Right cardiac atrium (tissue), 5 donors: ENCODE measurements at regions of chrX and their contacts with region 1.

Region 1: GRCh38 chrX:31036895-31037294 is 34.9 kb downstream of the FTHL17 start:
- DNase-seq: peak in 2 of 3 donors; percentile 22 to 26
- ATAC-seq: peak; percentile 57 to 71
- H3K4me3 ChIP-seq: no peak overlapping the region
- H3K27ac ChIP-seq: no peak overlapping the region
- H3K4me1 ChIP-seq: no peaks in the 10 kb centered on the region
- H3K27me3 ChIP-seq: no peaks in the 10 kb centered on the region

Region 2: GRCh38 chrX:30791296-30792278 is 245.3 kb before region 1 on chrX:
- intact Hi-C with region 1: no loop called
- DNase-seq: no peak
- ATAC-seq: no peak
- H3K4me3 ChIP-seq: no peak overlapping the region
- H3K27ac ChIP-seq: no peak overlapping the region
- H3K4me1 ChIP-seq: no peaks in the 10 kb centered on the region
- H3K27me3 ChIP-seq: no peaks in the 10 kb centered on the region

Region 3: DNA sequence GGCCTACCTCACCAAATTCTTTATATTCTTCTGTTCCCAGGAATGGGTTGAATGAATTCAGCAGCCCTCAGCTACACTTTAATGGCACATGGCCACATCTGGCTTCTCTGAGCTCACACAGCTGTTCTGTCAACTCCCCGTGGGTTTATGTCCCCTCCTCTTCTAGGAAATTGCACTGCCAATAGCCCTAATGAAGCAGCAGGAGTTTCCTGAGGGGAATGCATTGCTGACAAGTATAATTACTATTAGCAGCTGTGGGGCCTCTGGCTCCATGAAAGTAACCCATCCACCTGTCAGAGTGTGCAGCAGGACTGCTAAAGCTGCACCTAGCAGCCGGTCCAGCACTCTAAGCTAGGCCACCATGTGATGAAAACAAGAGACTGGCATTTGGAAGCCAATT is 15.4 kb before region 1 on chrX:
- intact Hi-C with region 1: no loop called
- DNase-seq: peak in 2 of 3 donors; percentile 44 to 51
- ATAC-seq: peak in 1 of 2 donors; percentile 55
- H3K4me3 ChIP-seq: no peak overlapping the region
- H3K27ac ChIP-seq: no peak overlapping the region
- H3K4me1 ChIP-seq: no peaks in the 10 kb centered on the region
- H3K27me3 ChIP-seq: no peaks in the 10 kb centered on the region

Region 4: GRCh38 chrX:31266172-31267076 is 229.5 kb after region 1 on chrX:
- intact Hi-C with region 1: loop called in 1 of 4 experiments (anchors 10 kb)
- DNase-seq: peak; percentile 55 to 86 (median 85)
- ATAC-seq: peak; percentile 95 to 97
- H3K4me3 ChIP-seq: peak overlapping the region; percentile 81
- H3K27ac ChIP-seq: peak overlapping the region; percentile 80
- H3K4me1 ChIP-seq: peaks cover 1% of the 10 kb centered on the region
- H3K27me3 ChIP-seq: no peaks in the 10 kb centered on the region

Region 5: GRCh38 chrX:31661280-31661679 is 624.4 kb after region 1 on chrX:
- intact Hi-C with region 1: loop called in 1 of 4 experiments (anchors 10 kb)
- DNase-seq: no peak
- ATAC-seq: no peak
- H3K4me3 ChIP-seq: no peak overlapping the region
- H3K27ac ChIP-seq: no peak overlapping the region
- H3K4me1 ChIP-seq: peaks cover 1% of the 10 kb centered on the region
- H3K27me3 ChIP-seq: no peaks in the 10 kb centered on the region